A549 (cell line): ENCODE measurements at regions of chr1 and their contacts with region 1.

Region 1: DNA sequence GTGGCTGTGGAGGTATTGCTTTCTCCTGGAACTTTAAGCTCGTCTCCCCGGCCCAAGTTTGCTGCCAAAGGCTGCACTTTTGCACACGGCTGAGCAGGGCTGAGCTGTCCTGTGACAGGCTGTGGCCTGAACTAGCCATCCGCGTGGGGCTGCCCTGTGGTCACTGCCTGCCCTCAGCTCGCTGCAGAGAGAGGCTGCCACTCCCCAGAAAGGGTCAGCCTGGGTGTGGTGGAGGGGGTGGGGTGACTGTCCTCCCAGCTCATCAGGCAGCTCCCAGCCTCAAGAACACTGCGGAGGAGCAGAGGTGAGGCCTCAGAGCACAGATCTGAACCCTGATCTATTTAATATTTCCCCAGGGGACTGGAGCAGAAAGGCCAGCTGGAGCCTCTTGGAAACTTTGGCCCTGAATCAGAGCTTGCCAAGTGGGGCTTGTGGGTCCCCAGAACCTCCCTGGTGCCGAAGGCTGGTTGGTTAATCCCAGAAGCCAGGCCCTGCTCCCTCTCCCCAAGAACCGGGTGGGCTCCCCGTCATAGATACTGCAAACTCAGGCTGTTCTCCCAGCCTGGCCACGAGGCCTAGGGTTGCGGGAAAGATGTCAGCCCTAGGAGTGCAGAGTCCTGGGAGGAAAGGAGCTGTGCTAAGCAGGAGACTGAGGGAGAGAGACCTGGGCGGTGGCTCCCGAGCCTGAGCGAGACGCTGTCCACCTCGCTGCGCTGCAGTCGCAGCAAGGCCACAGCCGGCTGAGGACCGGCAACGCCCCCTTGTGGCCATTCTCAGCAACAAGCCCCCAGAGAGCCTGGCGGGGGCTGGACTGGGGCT is 125.1 kb upstream of the IPO9 start:
- DNase-seq: peak; percentile 79 to 85
- ATAC-seq: peak; percentile 92 to 96
- H3K4me3 ChIP-seq: no peak overlapping the region
- H3K27ac ChIP-seq: peak overlapping the region; percentile 75 to 85
- H3K4me1 ChIP-seq: peaks cover 21% of the 10 kb centered on the region
- CTCF ChIP-seq: peak; percentile 97
- EP300 ChIP-seq: no peak
- POLR2A ChIP-seq: no peak
- RAD21 ChIP-seq: peak; percentile 98 to 99

Region 2: DNA sequence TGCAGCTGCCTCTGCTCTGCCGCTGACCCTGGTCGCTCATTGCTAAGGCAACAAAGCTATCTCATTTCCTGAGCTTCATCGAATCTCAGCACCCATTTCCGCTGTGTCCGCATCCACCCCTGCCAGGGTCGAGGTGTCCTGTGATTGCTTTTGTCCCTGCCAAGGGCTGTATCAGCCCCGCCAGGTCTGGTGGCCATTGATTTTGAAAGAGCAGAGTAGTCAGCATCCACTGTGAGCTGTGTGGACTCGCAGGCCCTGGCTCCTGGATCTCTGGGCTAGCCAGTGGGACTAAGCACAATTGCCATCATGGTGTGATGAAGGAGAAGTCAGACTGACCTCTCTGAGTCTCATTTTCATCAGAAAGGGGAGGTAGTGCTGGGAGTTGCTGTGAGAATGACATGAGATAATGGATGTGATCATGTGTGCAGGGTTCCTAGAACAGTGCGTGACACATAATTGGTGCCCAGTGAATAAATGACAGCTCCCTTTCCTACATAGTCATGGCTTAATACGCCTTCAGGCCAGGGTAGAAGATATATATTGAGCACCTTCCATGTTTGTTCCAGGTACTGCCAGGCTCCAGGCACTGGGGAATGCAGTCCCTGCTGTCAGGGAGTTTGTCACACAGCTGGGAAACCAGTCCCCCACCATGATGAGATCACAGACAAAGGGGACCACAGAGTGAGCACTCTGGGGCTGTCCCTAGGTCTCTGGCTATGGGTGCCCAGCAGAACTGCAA is 132.8 kb before region 1 on chr1:
- CTCF ChIA-PET with region 1: interaction called, 437 read pairs
- POLR2A ChIA-PET with region 1: no interaction called
- DNase-seq: no peak
- ATAC-seq: no peak
- H3K4me3 ChIP-seq: no peak overlapping the region
- H3K27ac ChIP-seq: peak overlapping the region in 1 of 2 experiments; percentile 33; a peak in 1 of 6 replicates
- H3K4me1 ChIP-seq: no peaks in the 10 kb centered on the region
- CTCF ChIP-seq: no peak
- EP300 ChIP-seq: no peak
- POLR2A ChIP-seq: no peak
- RAD21 ChIP-seq: no peak

Region 3: DNA sequence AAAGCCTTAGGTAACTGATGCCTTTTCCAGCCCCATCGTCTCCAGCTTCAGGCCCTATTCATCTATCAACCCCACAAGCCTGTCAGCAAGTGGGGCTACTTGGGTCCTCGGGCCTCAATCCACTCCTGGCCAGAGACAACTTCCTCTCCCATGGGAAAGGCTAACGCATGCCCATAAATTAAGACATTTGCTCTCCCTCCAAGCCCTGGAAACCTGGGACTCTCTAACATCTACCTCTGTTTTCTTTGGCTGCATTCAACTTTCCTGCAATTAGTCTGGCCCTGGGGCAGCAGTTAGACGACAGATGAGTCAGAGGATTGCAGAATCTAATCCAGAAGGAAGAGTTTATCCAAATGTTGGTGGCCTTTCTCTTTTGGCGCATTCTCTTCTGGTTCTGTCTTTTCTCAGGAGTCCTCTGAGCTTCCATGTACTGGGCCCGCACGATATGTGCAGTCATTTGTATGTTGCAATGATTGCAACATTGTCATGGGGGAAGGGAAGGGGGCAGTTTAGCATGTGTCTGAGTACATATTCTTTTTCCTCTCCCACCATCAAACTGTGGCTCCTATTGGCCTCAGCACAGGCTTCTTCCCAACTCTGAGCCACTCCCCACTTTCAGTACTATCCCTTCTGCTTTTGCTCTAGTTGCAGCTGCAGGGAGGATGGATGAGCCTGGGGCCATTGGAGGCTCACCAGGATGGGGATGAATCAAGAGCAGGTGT is 110.5 kb before region 1 on chr1:
- CTCF ChIA-PET with region 1: interaction called, 22 read pairs
- POLR2A ChIA-PET with region 1: no interaction called
- DNase-seq: peak; percentile 28 to 75
- ATAC-seq: peak; percentile 66
- H3K4me3 ChIP-seq: no peak overlapping the region
- H3K27ac ChIP-seq: peak overlapping the region; percentile 81 to 90
- H3K4me1 ChIP-seq: peaks cover 62% of the 10 kb centered on the region
- CTCF ChIP-seq: no peak
- EP300 ChIP-seq: peak; percentile 94 to 95; a peak in 4 of 5 replicates
- POLR2A ChIP-seq: no peak
- RAD21 ChIP-seq: peak in 1 of 2 experiments; percentile 43; a peak in 2 of 5 replicates

Region 4: GRCh38 chr1:201655243-201655642 is 48.6 kb before region 1 on chr1:
- CTCF ChIA-PET with region 1: interaction called, 15 read pairs
- POLR2A ChIA-PET with region 1: no interaction called
- DNase-seq: no peak
- ATAC-seq: peak in 1 of 2 experiments; percentile 14; a peak in 1 of 6 replicates
- H3K4me3 ChIP-seq: no peak overlapping the region
- H3K27ac ChIP-seq: no peak overlapping the region
- H3K4me1 ChIP-seq: peaks cover 19% of the 10 kb centered on the region
- CTCF ChIP-seq: no peak
- EP300 ChIP-seq: no peak
- POLR2A ChIP-seq: no peak
- RAD21 ChIP-seq: no peak

Region 5: DNA sequence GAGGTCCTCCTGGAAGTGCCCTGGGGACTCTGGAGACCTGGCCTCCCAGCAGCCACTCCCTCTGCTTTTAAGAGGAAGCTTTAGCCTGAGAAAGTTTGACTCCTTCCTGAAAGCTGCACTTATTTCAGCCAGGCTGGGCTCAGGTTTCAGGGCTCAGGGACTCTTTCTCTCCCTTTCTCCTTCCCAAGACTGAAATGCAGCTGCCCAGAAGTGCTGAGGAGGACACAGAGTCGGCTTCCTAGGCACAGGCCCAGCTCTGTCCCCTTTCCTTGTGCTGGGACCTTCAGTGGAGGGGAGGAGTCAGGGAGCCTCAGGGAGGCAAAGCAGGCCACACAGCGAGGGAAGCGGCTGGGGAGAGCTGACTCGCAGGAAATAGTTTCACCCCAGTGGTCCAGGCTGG is 27.6 kb before region 1 on chr1:
- CTCF ChIA-PET with region 1: interaction called, 12 read pairs
- POLR2A ChIA-PET with region 1: no interaction called
- DNase-seq: peak in 1 of 2 experiments; percentile 29
- ATAC-seq: peak; percentile 63 to 71; a peak in 4 of 6 replicates
- H3K4me3 ChIP-seq: no peak overlapping the region
- H3K27ac ChIP-seq: peak overlapping the region; percentile 46 to 79; a peak in 4 of 6 replicates
- H3K4me1 ChIP-seq: peaks cover 25% of the 10 kb centered on the region
- CTCF ChIP-seq: no peak
- EP300 ChIP-seq: no peak
- POLR2A ChIP-seq: no peak
- RAD21 ChIP-seq: no peak

Region 6: GRCh38 chr1:201739492-201740085 is 35.8 kb after region 1 on chr1:
- CTCF ChIA-PET with region 1: interaction called, 15 read pairs
- POLR2A ChIA-PET with region 1: no interaction called
- DNase-seq: no peak
- ATAC-seq: peak in 1 of 2 experiments; percentile 65; a peak in 3 of 6 replicates
- H3K4me3 ChIP-seq: no peak overlapping the region
- H3K27ac ChIP-seq: peak overlapping the region in 1 of 2 experiments; percentile 10; a peak in 1 of 6 replicates
- H3K4me1 ChIP-seq: peaks cover 6% of the 10 kb centered on the region; the same call in 1 of the 3 replicates
- CTCF ChIP-seq: no peak
- EP300 ChIP-seq: no peak
- POLR2A ChIP-seq: no peak
- RAD21 ChIP-seq: no peak